ENCODE measurements at regions of chr11 and their contacts with region 1.

Region 1: DNA sequence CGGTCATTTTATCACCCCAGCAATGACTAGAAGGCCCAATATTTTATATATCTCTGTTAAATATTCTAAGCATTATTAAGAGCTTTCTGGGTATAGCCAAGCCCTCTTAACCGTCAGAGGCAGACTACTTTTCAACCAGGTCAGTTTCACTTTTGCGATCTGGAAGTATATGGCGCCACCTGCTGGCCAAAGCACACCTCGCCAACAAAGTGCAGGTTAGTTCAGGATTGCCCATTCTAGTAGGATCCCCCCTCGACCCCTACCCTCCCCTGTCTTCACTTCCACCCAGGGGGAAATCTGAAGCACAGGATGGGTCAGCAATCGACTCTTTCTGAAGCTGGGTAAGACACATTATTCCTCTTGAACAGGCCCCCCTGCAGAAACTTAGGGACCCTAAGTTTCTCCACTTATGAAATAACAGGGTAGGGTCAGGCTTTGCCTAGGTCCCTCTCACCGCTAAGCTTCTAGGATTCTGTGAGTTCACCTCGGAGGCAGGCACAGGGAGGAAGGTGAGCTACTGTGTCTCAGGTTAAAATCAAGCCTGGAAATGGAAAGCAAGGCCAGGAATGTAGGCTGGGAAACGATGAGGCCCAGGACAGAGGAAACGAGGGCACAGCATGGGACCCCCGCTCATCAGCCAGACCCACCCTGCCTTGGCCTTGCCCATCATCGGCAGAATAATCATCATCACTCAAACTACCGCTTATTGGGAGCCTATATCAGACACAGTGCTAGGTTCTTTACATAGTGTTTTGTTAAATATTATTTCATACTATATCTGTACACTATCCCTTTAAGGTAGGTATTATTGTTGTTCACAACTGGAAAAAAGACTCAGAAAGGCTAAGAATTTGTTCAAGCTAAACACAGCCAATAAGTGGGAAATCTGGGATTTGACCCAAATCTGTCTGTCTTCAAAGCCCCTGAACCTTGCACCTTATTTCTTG is 35.6 kb downstream of the KCNJ1 start:
- DNase-seq: peak; percentile 68 to 85 (median 80)
- ATAC-seq: peak; percentile 90
- H3K4me3 ChIP-seq: peak overlapping the region; percentile 43
- H3K4me3 Mint-ChIP-seq: peak overlapping the region; percentile 61 to 87 (median 76)
- H3K27ac ChIP-seq: peak overlapping the region; percentile 67
- H3K27ac Mint-ChIP-seq: peak overlapping the region; percentile 58 to 98 (median 89)
- H3K4me1 ChIP-seq: peaks cover 11 to 15% of the 10 kb centered on the region in 2 donors
- H3K4me1 Mint-ChIP-seq: peaks cover 15 to 35% (median 24%) of the 10 kb centered on the region in 7 donors
- H3K27me3 ChIP-seq: no peaks in the 10 kb centered on the region
- H3K27me3 Mint-ChIP-seq: peaks cover 0 to 4% (median 0%) of the 10 kb centered on the region in 5 donors

Region 2: GRCh38 chr11:128157423-128158298 is 673.8 kb before region 1 on chr11:
- CTCF ChIA-PET with region 1: interaction called, 36 read pairs
- POLR2A ChIA-PET with region 1: interaction called, 7 read pairs
- intact Hi-C with region 1: loop called (anchors 1 kb)
- DNase-seq: peak in 8 of 9 donors; percentile 44 to 82 (median 74)
- ATAC-seq: peak; percentile 96
- H3K4me3 ChIP-seq: peak overlapping the region; percentile 33
- H3K4me3 Mint-ChIP-seq: peak overlapping the region in 9 of 10 donors; percentile 64 to 87 (median 77)
- H3K27ac ChIP-seq: peak overlapping the region; percentile 4
- H3K27ac Mint-ChIP-seq: peak overlapping the region in 7 of 9 donors; percentile 4 to 86 (median 58)
- H3K4me1 ChIP-seq: no peaks in the 10 kb centered on the region
- H3K4me1 Mint-ChIP-seq: peaks cover 0 to 10% (median 4%) of the 10 kb centered on the region in 7 donors
- H3K27me3 ChIP-seq: no peaks in the 10 kb centered on the region
- H3K27me3 Mint-ChIP-seq: peaks cover 0 to 28% (median 0%) of the 10 kb centered on the region in 5 donors

Region 3: DNA sequence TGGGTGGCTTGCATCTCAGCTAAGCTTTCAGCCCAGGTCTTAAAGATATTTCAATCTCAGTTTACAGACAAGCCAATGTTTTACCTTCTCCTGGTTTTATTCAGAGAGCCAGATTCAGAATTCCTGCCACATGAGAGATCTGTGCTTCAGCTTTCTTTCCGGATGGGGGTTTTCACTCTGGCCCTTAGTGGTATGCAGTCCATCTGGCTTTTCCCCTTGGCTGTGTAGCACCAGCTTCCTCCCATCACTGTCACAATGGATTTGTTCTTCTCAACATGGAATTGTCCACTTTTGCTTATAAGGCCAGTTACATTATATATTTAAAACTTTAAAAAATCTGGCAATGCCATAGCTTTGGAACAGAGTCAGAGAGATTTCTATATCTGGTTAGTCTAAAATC is 548.0 kb before region 1 on chr11:
- CTCF ChIA-PET with region 1: interaction called, 4 read pairs
- POLR2A ChIA-PET with region 1: no interaction called
- intact Hi-C with region 1: loop called in 1 of 2 experiments (anchors 1 kb)
- DNase-seq: no peak
- ATAC-seq: no peak
- H3K4me3 ChIP-seq: no peak overlapping the region
- H3K4me3 Mint-ChIP-seq: no peak overlapping the region
- H3K27ac ChIP-seq: no peak overlapping the region
- H3K27ac Mint-ChIP-seq: no peak overlapping the region
- H3K4me1 ChIP-seq: peaks cover 26 to 28% of the 10 kb centered on the region in 2 donors
- H3K4me1 Mint-ChIP-seq: peaks cover 28 to 46% (median 41%) of the 10 kb centered on the region in 7 donors
- H3K27me3 ChIP-seq: no peaks in the 10 kb centered on the region
- H3K27me3 Mint-ChIP-seq: peaks cover 0 to 12% (median 0%) of the 10 kb centered on the region in 5 donors

Region 4: DNA sequence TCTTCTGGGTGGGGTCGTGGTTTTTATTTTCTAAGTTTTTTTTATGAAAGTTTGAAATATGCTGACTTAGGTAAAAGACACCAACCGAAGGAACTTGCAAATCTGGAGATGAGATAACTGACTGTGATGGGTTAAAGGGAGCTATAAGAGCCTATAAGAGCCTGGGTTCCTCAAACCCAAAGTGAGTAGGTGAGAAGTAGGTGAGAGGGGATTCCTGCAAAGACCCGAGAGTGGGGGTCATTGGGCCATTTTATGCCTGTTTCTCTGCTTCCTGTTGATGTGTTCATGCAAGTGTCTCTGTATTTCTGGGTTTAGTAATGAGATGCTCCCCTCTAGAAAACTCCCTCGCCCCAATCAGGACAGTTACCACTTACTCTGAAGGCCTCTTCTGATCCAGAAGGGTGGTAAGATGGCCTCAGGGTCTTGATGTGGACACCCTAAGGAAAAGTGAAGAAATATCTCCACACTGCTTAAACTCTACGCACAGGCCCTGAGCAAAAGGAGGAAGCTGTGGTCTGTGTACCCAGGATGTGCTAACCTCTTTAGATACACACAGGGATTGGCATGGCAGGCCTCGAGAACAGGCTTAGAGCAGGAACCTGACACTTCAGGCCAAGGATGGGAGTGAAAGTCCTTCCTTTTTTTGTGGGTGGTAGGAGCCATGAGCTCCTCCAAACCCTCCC is 135.8 kb before region 1 on chr11:
- CTCF ChIA-PET with region 1: interaction called, 3 read pairs
- POLR2A ChIA-PET with region 1: interaction called, 3 read pairs
- intact Hi-C with region 1: loop called in 1 of 2 experiments (anchors 2 kb)
- DNase-seq: peak in 7 of 9 donors; percentile 39 to 63 (median 52)
- ATAC-seq: peak; percentile 75
- H3K4me3 ChIP-seq: peak overlapping the region; percentile 82
- H3K4me3 Mint-ChIP-seq: peak overlapping the region; percentile 89 to 99 (median 96)
- H3K27ac ChIP-seq: peak overlapping the region; percentile 86
- H3K27ac Mint-ChIP-seq: peak overlapping the region; percentile 72 to 96 (median 94)
- H3K4me1 ChIP-seq: peaks cover 45 to 53% of the 10 kb centered on the region in 2 donors
- H3K4me1 Mint-ChIP-seq: peaks cover 53 to 75% (median 67%) of the 10 kb centered on the region in 7 donors
- H3K27me3 ChIP-seq: no peaks in the 10 kb centered on the region
- H3K27me3 Mint-ChIP-seq: peaks cover 0 to 22% (median 0%) of the 10 kb centered on the region in 5 donors

Region 5: GRCh38 chr11:128841461-128842072 is 10.1 kb after region 1 on chr11:
- CTCF ChIA-PET with region 1: interaction called, 37 read pairs
- POLR2A ChIA-PET with region 1: interaction called, 5 read pairs
- intact Hi-C with region 1: loop called in 1 of 2 experiments (anchors 1 kb)
- DNase-seq: no peak
- ATAC-seq: no peak
- H3K4me3 ChIP-seq: no peak overlapping the region
- H3K4me3 Mint-ChIP-seq: peak overlapping the region in 2 of 10 donors; percentile 3 to 37
- H3K27ac ChIP-seq: no peak overlapping the region
- H3K27ac Mint-ChIP-seq: no peak overlapping the region
- H3K4me1 ChIP-seq: peaks cover 41 to 56% of the 10 kb centered on the region in 2 donors
- H3K4me1 Mint-ChIP-seq: peaks cover 33 to 95% (median 84%) of the 10 kb centered on the region in 7 donors
- H3K27me3 ChIP-seq: no peaks in the 10 kb centered on the region
- H3K27me3 Mint-ChIP-seq: peaks cover 0 to 6% (median 0%) of the 10 kb centered on the region in 5 donors

Region 6: DNA sequence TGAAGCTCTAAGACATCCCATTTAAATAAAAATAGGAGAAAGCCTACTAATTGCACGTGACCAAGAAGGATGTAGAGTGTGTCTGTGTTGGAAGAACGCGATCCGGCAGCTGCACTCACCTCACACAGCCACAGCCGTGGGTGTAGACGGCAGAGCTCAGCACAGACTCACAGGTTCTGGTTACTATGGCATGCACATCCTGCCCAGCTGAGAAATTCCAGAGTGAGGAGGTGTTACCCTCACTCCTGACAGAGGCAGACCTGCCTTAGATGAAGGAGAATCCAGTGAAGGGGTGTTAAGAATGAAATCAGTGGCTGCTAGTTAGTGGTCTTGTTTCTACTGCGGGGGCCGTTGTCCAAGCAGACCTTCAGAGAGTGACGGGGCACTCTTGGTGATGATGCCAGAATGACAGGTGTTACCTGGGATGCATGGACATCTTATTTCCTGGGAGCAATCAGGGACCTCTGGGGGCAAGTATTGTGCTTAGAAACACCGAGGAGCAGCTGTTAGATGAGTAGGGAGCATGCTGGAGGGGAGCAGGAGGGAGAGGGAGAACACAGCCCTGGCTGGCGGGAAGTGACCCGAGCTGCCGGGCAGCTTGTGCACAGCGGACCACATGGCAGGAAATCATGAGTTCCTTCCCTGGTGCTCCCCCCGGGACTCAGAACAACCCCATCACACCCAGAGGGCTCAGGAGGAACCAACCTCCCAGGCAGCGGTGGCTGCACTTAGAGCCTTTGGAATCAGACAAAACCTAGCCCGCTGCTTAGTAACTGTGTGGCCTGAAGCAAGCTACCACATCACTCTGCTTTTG is 72.0 kb after region 1 on chr11:
- CTCF ChIA-PET with region 1: no interaction called
- POLR2A ChIA-PET with region 1: no interaction called
- intact Hi-C with region 1: no loop called
- DNase-seq: no peak
- ATAC-seq: peak; percentile 20
- H3K4me3 ChIP-seq: no peak overlapping the region
- H3K4me3 Mint-ChIP-seq: peak overlapping the region in 9 of 10 donors; percentile 4 to 86 (median 65)
- H3K27ac ChIP-seq: no peak overlapping the region
- H3K27ac Mint-ChIP-seq: peak overlapping the region in 1 of 9 donors; percentile 52
- H3K4me1 ChIP-seq: peaks cover 0 to 3% of the 10 kb centered on the region in 2 donors
- H3K4me1 Mint-ChIP-seq: peaks cover 7 to 24% (median 11%) of the 10 kb centered on the region in 7 donors
- H3K27me3 ChIP-seq: peaks cover 1 to 5% of the 10 kb centered on the region in 2 donors
- H3K27me3 Mint-ChIP-seq: peaks cover 0 to 72% (median 12%) of the 10 kb centered on the region in 5 donors